A673 (cell line): ENCODE measurements at regions of chr1 and their contacts with region 1.

Region 1: GRCh38 chr1:12658531-12659453 is 14.9 kb downstream of the AADACL4 start:
- DNase-seq: peak; percentile 88
- H3K4me3 ChIP-seq: no peak overlapping the region
- H3K27ac ChIP-seq: no peak overlapping the region
- H3K4me1 ChIP-seq: no peaks in the 10 kb centered on the region
- H3K27me3 ChIP-seq: no peaks in the 10 kb centered on the region
- CTCF ChIP-seq: peak; percentile 94

Region 2: GRCh38 chr1:12314333-12314903 is 344.4 kb before region 1 on chr1:
- CTCF ChIA-PET with region 1: interaction called, 9 read pairs
- POLR2A ChIA-PET with region 1: no interaction called
- intact Hi-C with region 1: loop called (anchors 2 kb)
- DNase-seq: peak; percentile 46
- H3K4me3 ChIP-seq: no peak overlapping the region
- H3K27ac ChIP-seq: no peak overlapping the region
- H3K4me1 ChIP-seq: peaks cover 5% of the 10 kb centered on the region
- H3K27me3 ChIP-seq: no peaks in the 10 kb centered on the region
- CTCF ChIP-seq: peak; percentile 63

Region 3: DNA sequence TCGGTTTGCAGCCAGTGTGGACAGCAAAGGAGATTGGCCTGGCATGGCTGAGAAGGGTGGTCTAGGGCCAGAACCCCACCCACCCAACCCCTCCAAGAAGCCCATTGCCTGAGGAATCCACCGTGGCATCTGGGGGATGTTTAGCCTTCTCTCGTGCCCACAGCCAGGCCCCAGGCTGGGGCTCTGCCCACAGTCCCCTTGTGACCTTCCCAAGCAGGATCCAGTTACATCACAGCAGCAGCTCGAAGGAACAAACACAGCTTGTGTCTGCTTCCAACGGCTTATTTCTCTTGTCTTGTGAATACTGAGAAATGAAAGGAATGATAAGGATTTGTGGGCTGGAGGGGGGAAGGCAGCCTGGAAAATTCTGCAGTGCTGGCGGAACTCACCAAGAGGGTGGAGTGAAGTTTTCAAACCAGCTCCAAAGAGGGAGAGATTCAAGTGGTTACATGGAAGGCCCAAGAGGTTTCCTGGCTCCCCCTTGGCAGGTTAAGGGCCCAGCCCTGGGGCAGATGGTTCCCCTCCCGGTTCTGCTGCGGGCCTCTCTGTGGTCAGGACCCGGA is 102.3 kb before region 1 on chr1:
- CTCF ChIA-PET with region 1: no interaction called
- POLR2A ChIA-PET with region 1: no interaction called
- intact Hi-C with region 1: loop called (anchors 5 kb)
- DNase-seq: no peak
- H3K4me3 ChIP-seq: no peak overlapping the region
- H3K27ac ChIP-seq: no peak overlapping the region
- H3K4me1 ChIP-seq: no peaks in the 10 kb centered on the region
- H3K27me3 ChIP-seq: no peaks in the 10 kb centered on the region
- CTCF ChIP-seq: no peak

Region 4: GRCh38 chr1:12579793-12580499 is 78.8 kb before region 1 on chr1:
- CTCF ChIA-PET with region 1: no interaction called
- POLR2A ChIA-PET with region 1: no interaction called
- intact Hi-C with region 1: no loop called
- DNase-seq: peak; percentile 19
- H3K4me3 ChIP-seq: no peak overlapping the region
- H3K27ac ChIP-seq: no peak overlapping the region
- H3K4me1 ChIP-seq: no peaks in the 10 kb centered on the region
- H3K27me3 ChIP-seq: no peaks in the 10 kb centered on the region
- CTCF ChIP-seq: no peak